Transverse colon (tissue), 4 donors: ENCODE measurements at regions of chr1 and their contacts with region 1.

Region 1: DNA sequence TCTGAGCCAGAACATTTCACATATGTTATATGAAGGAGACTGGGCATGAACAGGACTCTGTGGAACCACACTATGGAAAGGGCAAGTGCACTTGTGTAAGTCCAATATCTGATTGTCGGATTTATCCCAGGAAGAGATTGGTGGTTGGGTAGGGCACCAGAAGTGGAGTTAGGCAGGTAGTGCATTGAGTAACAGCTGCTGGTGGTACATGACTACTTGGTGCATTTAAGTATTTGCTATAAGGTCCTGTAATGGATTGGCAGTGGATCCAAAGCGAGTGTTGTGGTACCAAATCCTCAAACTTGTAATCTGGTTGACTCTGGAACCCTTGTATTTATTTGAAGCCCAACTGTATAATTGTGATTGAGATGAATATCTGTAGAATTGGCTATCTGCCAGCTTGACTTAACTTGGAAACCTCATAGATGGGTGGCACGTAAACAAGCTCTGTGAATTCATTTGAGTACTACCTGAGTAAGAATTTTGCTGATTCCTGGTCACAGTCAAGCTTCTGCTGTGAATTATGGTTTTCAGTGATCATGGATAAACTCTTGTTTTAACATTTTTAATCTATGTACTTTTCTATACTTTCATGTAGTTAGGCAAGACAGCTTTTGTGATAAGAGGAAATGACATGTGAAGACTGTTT is 21.1 kb downstream of the UBAP2L start:
- DNase-seq: no peak
- H3K4me3 ChIP-seq: no peak overlapping the region
- H3K27ac ChIP-seq: no peak overlapping the region
- H3K4me1 ChIP-seq: no peaks in the 10 kb centered on the region
- H3K27me3 ChIP-seq: no peaks in the 10 kb centered on the region
- CTCF ChIP-seq: no peak
- EP300 ChIP-seq: no peak
- POLR2A ChIP-seq: no peak

Region 2: DNA sequence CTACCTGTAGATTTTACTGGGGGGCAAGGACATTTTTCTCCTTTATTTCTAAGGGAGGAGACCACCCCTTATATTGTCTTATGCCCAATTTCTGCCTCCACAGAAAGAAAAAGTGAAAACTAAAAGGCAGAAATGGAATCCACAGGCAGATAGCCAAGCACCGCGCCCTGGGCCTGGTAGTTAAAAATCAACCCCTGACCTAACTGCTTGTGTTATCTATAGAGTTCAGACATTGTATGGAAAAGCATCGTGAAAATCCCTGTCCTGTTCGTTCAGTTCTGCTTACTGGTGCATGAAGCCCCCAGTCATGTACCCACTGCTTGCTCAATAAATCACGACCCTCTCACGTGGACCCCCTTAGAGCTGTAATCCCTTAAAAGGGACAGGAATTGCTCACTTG is 129.6 kb after region 1 on chr1:
- in situ Hi-C with region 1: no loop called
- intact Hi-C with region 1: no loop called
- DNase-seq: peak; percentile 67
- H3K4me3 ChIP-seq: no peak overlapping the region
- H3K27ac ChIP-seq: peak overlapping the region in 3 of 4 donors; percentile 16 to 43 (median 31)
- H3K4me1 ChIP-seq: peaks cover 0 to 7% (median 0%) of the 10 kb centered on the region in 4 donors
- H3K27me3 ChIP-seq: no peaks in the 10 kb centered on the region
- CTCF ChIP-seq: no peak
- EP300 ChIP-seq: no peak
- POLR2A ChIP-seq: no peak

Region 3: DNA sequence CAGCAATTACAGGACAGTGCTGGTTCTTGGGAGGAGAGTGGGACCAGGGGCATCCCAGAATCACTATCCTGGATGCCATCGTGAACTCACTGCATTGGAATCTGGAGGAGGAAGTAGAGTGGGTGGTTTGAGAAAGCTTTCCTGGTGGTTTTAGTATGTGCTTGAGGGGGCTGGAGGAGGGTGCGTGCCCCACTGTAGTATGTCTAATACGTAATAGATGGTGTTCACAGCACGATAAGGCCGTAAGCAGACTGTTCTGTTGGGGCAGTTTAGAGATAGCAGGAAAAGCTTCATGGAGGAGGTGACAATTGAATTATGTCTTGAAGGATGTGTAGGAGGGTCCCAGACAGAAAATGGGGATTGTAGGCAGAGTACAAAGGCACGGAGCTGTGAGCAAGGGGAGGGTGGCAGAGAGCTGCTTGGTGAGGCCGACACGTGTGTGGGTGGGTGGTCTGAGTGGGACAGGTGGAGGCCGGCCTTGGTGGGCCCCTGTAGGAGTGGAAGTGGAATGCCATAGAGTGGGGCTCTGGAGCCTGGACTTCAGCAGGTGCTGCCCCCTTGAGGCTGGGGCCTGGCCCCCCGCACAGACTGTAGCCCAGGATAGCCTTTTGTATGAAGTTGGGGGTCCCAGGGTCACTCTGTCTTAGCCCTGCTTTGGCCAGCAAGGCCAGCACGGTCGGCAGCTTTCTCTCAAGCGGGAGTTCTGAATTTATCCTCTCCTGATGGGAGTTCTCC is 200.3 kb after region 1 on chr1:
- in situ Hi-C with region 1: no loop called
- intact Hi-C with region 1: no loop called
- DNase-seq: no peak
- H3K4me3 ChIP-seq: no peak overlapping the region
- H3K27ac ChIP-seq: peak overlapping the region in 2 of 4 donors; percentile 32 to 42
- H3K4me1 ChIP-seq: peaks cover 8 to 68% (median 32%) of the 10 kb centered on the region in 4 donors
- H3K27me3 ChIP-seq: no peaks in the 10 kb centered on the region
- CTCF ChIP-seq: peak; percentile 14 to 27 (median 18)
- EP300 ChIP-seq: no peak
- POLR2A ChIP-seq: no peak

Region 4: DNA sequence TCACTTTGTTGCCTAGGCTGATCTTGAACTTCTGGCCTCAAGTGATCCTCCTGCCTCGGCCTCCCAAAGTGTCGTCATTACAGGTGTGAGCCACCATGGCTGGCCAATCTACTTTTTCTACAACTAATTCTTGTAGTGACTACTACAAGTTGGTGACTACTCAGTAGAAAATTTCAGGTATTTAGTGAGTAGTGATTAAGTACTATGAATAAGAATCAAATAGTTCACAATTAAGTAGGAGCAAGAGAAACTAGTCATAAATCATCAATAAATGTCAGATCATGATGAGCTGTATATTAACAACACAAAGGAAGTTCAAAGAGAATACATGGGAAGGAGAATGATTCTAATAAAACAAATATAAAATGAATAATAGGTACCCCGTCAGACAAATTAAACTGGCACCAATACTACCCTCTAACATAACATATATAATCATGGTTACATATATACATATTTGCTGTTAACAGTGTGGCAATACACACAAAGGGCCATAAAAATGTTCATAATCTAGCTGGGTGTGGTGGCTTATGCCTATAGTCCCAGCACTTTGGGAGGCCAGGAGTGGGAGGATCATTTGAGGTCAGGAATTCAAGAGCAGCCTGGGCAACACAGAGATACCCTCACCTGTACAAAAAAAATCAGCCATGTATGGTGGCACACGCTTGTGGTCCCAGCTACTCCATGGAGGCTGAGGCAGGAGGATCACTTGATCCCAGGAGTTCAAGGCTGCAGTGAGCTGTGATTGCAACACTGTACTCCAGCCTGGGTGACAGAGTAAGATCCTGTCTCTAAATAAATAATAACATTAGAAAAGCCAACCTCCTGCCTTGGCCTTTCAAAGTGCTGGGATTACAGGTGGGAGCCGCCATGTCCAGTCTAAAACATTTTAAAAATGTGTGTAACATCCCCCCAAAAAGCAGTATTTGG is 1427.7 kb after region 1 on chr1:
- in situ Hi-C with region 1: no loop called
- intact Hi-C with region 1: no loop called
- DNase-seq: no peak
- H3K4me3 ChIP-seq: no peak overlapping the region
- H3K27ac ChIP-seq: peak overlapping the region in 2 of 4 donors; percentile 30 to 34
- H3K4me1 ChIP-seq: peaks cover 0 to 8% (median 4%) of the 10 kb centered on the region in 4 donors
- H3K27me3 ChIP-seq: no peaks in the 10 kb centered on the region
- CTCF ChIP-seq: no peak
- EP300 ChIP-seq: no peak
- POLR2A ChIP-seq: no peak

Region 5: DNA sequence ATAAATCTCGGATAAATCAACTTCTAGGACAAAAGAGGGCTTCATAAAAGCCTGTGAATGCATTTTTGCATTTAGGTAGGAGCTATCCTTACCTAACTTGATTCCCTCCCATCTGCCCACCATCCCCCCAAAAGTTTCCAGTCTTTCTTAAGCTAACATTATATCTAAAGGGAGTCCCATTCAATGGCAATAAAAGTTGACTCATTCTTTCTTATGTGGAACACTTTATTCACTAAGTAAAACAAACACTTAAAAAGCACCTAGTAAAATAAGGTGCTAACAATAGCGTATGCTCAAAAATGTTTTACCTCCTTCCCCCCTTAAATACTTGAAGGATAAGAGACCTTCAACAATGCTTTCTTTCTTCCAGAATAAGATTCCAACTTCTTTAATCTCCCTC is 1531.4 kb after region 1 on chr1:
- in situ Hi-C with region 1: no loop called
- intact Hi-C with region 1: loop called (anchors 5 kb)
- DNase-seq: no peak
- H3K4me3 ChIP-seq: no peak overlapping the region
- H3K27ac ChIP-seq: no peak overlapping the region
- H3K4me1 ChIP-seq: no peaks in the 10 kb centered on the region
- H3K27me3 ChIP-seq: no peaks in the 10 kb centered on the region
- CTCF ChIP-seq: no peak
- EP300 ChIP-seq: no peak
- POLR2A ChIP-seq: no peak